Activated CD4-positive, alpha-beta T cell treated with anti-CD3 and anti-CD28 coated beads, Interleukin-2, amount 10 ng/mL, durations not matched to agents 7 days and 5 days (primary cell): ENCODE measurements at regions of chr16 and their contacts with region 1.

Region 1: GRCh38 chr16:30472328-30472942 is at the start of gene ITGAL:
- DNase-seq: peak; percentile 93
- H3K4me3 Mint-ChIP-seq: peak within 1 kb of the TSS; percentile 99
- H3K27ac Mint-ChIP-seq: peak within 1 kb of the TSS; percentile 92
- H3K4me1 Mint-ChIP-seq: peaks cover 61% of the 10 kb centered on the region
- H3K27me3 Mint-ChIP-seq: no peaks in the 10 kb centered on the region
- total RNA-seq, gene ITGAL: 521 to 598 TPM

Region 2: DNA sequence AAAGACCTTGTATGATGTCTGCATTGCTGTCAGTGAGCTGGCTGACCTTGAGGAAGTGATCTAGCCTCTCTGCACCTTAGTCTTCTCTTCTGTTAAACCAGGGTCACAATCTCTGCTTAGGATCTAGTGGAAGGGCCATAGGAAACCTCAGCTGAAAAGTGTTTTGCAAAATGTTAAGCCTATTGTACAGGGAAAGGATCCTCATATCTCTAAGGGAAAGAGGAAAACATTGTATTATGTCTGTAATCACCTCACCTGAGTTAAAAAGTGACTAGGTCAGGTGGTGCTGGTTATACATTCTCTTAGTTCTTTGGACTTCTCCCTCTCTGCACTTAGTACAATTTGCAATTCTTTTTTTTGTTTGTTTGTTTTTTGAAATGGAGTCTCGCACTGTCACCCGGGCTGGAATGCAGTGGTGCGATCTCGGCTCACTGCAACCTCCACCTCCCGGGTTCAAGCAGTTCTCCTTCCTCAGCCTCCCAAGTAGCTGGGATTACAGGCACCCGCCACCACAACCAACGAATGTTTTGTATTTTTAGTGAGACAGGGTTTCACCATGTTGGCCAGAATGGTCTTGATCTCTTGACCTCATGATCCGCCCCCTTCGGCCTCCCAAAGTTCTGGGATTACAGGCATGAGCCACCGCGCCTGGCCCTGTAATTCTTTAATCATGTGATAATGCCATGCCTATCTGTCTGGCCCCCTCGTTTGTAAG is 24.8 kb before region 1 on chr16:
- CTCF ChIA-PET with region 1: interaction called, 21 read pairs
- POLR2A ChIA-PET with region 1: interaction called, 11 read pairs
- DNase-seq: no peak
- H3K4me3 Mint-ChIP-seq: no peak overlapping the region
- H3K27ac Mint-ChIP-seq: peak overlapping the region; percentile 68
- H3K4me1 Mint-ChIP-seq: peaks cover 72% of the 10 kb centered on the region
- H3K27me3 Mint-ChIP-seq: no peaks in the 10 kb centered on the region

Region 3: DNA sequence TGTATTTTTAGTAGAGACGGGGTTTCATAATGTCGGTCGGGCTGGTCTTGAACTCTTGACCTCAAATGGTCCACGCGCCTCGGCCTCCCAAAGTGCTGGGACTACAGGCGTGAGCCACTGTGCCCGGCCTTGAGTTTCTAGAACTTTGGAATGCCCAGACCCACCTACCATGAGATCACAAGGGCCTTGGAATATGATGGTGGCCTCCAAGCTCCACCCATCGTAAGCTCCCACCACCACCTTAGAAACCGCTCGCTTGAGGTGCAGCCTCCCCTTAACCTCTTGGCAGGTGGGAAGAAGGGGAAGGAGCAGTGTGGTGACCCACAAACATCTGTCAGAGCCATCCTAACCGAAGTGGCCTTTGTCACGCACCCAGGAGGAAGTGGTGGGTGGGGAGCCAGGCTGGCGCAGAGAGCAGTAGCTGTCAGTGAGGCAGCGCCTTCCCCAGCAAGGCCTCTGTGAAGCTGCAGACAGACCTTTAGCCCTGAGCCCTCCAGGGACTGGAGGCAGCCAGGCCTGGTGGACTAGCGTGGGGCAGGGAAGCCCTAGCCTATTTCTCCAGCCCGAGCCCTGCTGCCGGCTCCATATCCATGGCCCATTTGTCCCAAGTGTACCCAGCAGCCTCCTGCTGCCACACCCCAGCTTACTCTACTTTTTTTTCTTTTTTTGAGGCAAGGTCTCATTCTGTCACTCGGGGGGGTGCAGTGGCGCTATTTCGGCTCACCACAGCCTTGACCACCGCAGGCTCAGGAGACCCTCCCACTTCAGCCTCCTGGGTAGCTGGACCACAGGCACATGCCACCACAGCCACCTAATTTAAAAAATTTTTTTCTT is 13.7 kb before region 1 on chr16:
- CTCF ChIA-PET with region 1: interaction called, 25 read pairs
- POLR2A ChIA-PET with region 1: interaction called, 23 read pairs
- DNase-seq: peak; percentile 93
- H3K4me3 Mint-ChIP-seq: peak overlapping the region; percentile 68
- H3K27ac Mint-ChIP-seq: peak overlapping the region; percentile 99
- H3K4me1 Mint-ChIP-seq: peaks cover 79% of the 10 kb centered on the region
- H3K27me3 Mint-ChIP-seq: no peaks in the 10 kb centered on the region